Activated CD8-positive, alpha-beta T cell treated with anti-CD3 and anti-CD28 coated beads, Interleukin-2, amount 10 ng/mL, durations not matched to agents 7 days and 5 days (primary cell): ENCODE measurements at regions of chr6 and their contacts with region 1.

Region 1: GRCh38 chr6:169789982-169790927 is 38.8 kb downstream of the ERMARD start:
- DNase-seq: peak; percentile 76
- ATAC-seq: peak; percentile 97
- H3K4me3 Mint-ChIP-seq: peak overlapping the region; percentile 67
- H3K27ac Mint-ChIP-seq: no peak overlapping the region
- H3K4me1 Mint-ChIP-seq: peaks cover 14% of the 10 kb centered on the region
- H3K27me3 Mint-ChIP-seq: peaks cover 54% of the 10 kb centered on the region

Region 2: DNA sequence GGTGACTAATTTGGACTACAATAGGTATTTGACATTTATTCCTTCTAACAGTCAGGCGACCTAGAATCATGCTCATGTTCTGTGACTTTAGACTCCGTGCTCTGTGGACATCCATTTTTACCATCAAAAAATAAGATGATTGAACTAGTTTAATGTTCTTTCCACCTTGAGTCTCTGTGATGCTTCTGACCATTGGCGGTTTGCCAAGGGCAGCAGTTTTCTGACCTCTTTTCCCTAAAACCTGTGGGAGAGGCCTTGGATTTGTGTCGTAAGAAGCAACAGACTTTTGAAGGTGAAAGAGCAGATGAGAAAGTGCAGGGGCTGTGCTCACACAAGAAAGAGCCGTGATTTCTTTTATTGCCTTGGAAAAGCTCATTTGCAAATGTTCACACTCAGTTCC is 21.4 kb before region 1 on chr6:
- CTCF ChIA-PET with region 1: interaction called, 13 read pairs
- POLR2A ChIA-PET with region 1: no interaction called
- DNase-seq: no peak
- ATAC-seq: no peak
- H3K4me3 Mint-ChIP-seq: no peak overlapping the region
- H3K27ac Mint-ChIP-seq: no peak overlapping the region
- H3K4me1 Mint-ChIP-seq: no peaks in the 10 kb centered on the region
- H3K27me3 Mint-ChIP-seq: no peaks in the 10 kb centered on the region

Region 3: GRCh38 chr6:169800668-169801395 is 10.6 kb after region 1 on chr6:
- CTCF ChIA-PET with region 1: interaction called, 98 read pairs
- POLR2A ChIA-PET with region 1: no interaction called
- DNase-seq: no peak
- ATAC-seq: no peak
- H3K4me3 Mint-ChIP-seq: no peak overlapping the region
- H3K27ac Mint-ChIP-seq: no peak overlapping the region
- H3K4me1 Mint-ChIP-seq: peaks cover 31% of the 10 kb centered on the region
- H3K27me3 Mint-ChIP-seq: peaks cover 66% of the 10 kb centered on the region